ENCODE measurements at regions of chr20 and their contacts with region 1.

Region 1: GRCh38 chr20:38221119-38221589 is 39.4 kb downstream of the KIAA1755 start:
- DNase-seq: peak; percentile 79
- ATAC-seq: peak; percentile 83
- H3K4me3 ChIP-seq: no peak overlapping the region
- H3K27ac ChIP-seq: no peak overlapping the region
- H3K4me1 ChIP-seq: no peaks in the 10 kb centered on the region
- H3K27me3 ChIP-seq: no peaks in the 10 kb centered on the region
- CTCF ChIP-seq: peak; percentile 91

Region 2: DNA sequence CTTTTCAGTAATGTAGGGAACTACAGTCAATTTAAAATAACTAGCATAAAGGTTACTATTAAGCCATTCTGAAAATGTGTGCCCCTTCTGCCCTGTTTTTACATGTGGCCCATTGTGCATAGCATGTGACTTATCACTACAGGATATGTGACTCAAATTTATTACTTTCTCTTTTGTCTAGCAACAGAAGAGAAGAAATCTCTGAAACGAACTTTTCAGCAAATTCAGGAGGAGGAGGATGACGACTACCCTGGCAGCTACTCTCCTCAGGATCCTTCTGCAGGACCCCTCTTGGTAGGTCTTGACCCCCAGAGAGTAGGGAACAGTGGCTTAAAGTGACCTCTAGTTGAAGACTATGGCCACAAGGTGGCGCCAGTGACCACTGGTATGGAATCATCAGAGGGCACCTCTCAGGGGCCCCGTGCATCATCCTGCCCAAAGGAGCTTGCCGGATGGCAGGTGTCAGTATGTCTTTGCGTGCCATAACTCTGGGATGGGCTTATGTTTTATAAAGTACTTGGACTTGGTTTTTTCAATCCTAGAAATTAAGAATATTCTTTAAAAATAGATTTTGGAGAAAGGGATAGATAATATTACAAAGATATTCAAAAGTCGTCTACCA is 163.7 kb before region 1 on chr20:
- intact Hi-C with region 1: loop called (anchors 5 kb)
- DNase-seq: peak; percentile 89
- ATAC-seq: peak; percentile 83 to 90
- H3K4me3 ChIP-seq: no peak overlapping the region
- H3K27ac ChIP-seq: no peak overlapping the region
- H3K4me1 ChIP-seq: peaks cover 9% of the 10 kb centered on the region
- H3K27me3 ChIP-seq: no peaks in the 10 kb centered on the region
- CTCF ChIP-seq: peak; percentile 91

Region 3: GRCh38 chr20:38573413-38573812 is 352.3 kb after region 1 on chr20:
- intact Hi-C with region 1: no loop called
- DNase-seq: no peak
- ATAC-seq: no peak
- H3K4me3 ChIP-seq: no peak overlapping the region
- H3K27ac ChIP-seq: no peak overlapping the region
- H3K4me1 ChIP-seq: no peaks in the 10 kb centered on the region
- H3K27me3 ChIP-seq: no peaks in the 10 kb centered on the region
- CTCF ChIP-seq: no peak

Measured in lower lobe of right lung (tissue), 2 donors.